HepG2 (cell line): ENCODE measurements at regions of chr5 and their contacts with region 1.

Region 1: GRCh38 chr5:52007230-52007858 is 624.1 kb downstream of the ISL1 start:
- DNase-seq: peak; percentile 33
- ATAC-seq: peak; percentile 89
- H3K4me3 ChIP-seq: no peak overlapping the region
- H3K27ac ChIP-seq: no peak overlapping the region
- H3K4me1 ChIP-seq: no peaks in the 10 kb centered on the region
- H3K27me3 ChIP-seq: no peaks in the 10 kb centered on the region
- CTCF ChIP-seq: peak; percentile 77
- EP300 ChIP-seq: no peak
- POLR2A ChIP-seq: no peak
- RAD21 ChIP-seq: peak; percentile 33; the same call in 1 of the 2 replicates

Region 2: GRCh38 chr5:51382763-51383490 is 624.4 kb before region 1 on chr5 and contains the start of gene ISL1:
- CTCF ChIA-PET with region 1: interaction called, 7 read pairs
- POLR2A ChIA-PET with region 1: no interaction called
- in situ Hi-C with region 1: loop called (anchors 25 kb)
- intact Hi-C with region 1: loop called (anchors 1 kb)
- DNase-seq: no peak
- ATAC-seq: peak; percentile 61
- H3K4me3 ChIP-seq: no peak within 1 kb of the TSS
- H3K27ac ChIP-seq: no peak within 1 kb of the TSS
- H3K4me1 ChIP-seq: no peaks in the 10 kb centered on the region
- H3K27me3 ChIP-seq: peaks cover 6 to 56% of the 10 kb centered on the region in 2 experiments; a peak in 4 of 5 replicates
- CTCF ChIP-seq: no peak
- EP300 ChIP-seq: no peak
- POLR2A ChIP-seq: no peak
- RAD21 ChIP-seq: no peak
- total RNA-seq, gene ISL1: not detected in 2 replicates

Region 3: DNA sequence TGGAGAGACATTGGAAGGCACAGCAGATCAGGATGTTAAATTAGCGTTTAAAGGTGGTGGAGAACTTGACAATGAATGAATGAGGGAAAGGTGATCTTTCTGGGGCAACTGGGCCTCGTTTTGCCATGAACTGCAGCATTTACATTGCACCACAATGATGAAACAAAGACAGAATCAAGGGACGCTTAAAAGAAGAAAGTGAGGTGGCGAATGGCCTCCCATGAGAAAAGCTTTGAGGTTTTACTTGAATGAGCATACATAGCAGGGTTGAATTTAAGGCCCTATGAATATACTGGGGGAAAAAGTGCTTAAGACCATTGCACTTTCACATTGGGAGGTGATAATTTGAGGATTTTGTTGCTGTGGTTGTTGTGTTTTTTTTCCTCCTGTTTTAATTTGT is 147.7 kb before region 1 on chr5:
- CTCF ChIA-PET with region 1: no interaction called
- POLR2A ChIA-PET with region 1: no interaction called
- in situ Hi-C with region 1: no loop called
- intact Hi-C with region 1: no loop called
- DNase-seq: no peak
- ATAC-seq: no peak
- H3K4me3 ChIP-seq: no peak overlapping the region
- H3K27ac ChIP-seq: no peak overlapping the region
- H3K4me1 ChIP-seq: no peaks in the 10 kb centered on the region
- H3K27me3 ChIP-seq: no peaks in the 10 kb centered on the region
- CTCF ChIP-seq: no peak
- EP300 ChIP-seq: no peak
- POLR2A ChIP-seq: no peak
- RAD21 ChIP-seq: no peak

Region 4: GRCh38 chr5:52657247-52657645 is 649.9 kb after region 1 on chr5:
- CTCF ChIA-PET with region 1: no interaction called
- POLR2A ChIA-PET with region 1: no interaction called
- in situ Hi-C with region 1: loop called (anchors 25 kb)
- intact Hi-C with region 1: no loop called
- DNase-seq: peak; percentile 18
- ATAC-seq: no peak
- H3K4me3 ChIP-seq: no peak overlapping the region
- H3K27ac ChIP-seq: no peak overlapping the region
- H3K4me1 ChIP-seq: no peaks in the 10 kb centered on the region
- H3K27me3 ChIP-seq: no peaks in the 10 kb centered on the region
- CTCF ChIP-seq: peak; percentile 53
- EP300 ChIP-seq: no peak
- POLR2A ChIP-seq: no peak
- RAD21 ChIP-seq: no peak